PC-3 (cell line): ENCODE measurements at regions of chr10 and their contacts with region 1.

Region 1: DNA sequence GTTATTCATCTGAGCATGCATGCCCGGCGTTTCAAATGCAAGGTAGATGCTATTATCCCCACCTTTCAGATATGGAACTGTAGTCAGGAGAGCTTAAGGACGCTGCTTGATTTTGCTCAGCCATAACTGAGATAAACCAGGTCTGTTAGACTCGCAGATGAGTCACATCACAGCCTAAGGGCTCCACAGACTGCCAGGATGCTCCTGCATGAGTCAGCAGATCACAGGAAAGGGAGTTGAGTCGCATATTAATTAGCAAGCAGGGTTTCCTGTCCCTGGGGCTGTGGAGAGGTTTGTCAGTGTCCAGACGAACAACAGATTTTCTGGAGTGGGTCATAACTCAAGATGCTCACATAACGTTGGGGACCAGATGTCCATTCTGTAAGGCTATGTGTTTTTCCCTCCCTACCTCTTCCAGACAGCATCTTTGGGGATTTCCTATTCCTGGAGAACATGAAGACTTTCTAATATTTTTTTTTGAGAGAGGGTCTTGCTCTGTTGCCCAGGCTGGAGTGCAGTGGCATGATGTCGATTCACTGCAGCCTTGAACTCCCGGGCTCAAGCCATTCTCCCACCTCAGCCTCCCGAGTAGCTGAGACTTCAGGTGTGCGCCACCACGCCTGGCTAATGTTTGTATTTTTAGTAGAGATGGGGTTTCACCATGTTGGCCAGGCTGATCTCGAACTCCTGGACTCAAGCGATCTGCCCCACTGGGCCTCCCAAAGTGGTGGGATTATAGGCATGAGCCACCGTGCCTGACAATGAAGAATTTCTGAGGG is 36.7 kb downstream of the PFKFB3 start:
- DNase-seq: peak; percentile 94
- ATAC-seq: peak; percentile 94
- H3K4me3 ChIP-seq: no peak overlapping the region
- H3K27ac ChIP-seq: peak overlapping the region; percentile 57
- H3K4me1 ChIP-seq: peaks cover 8% of the 10 kb centered on the region; the same call in 1 of the 2 replicates
- H3K27me3 ChIP-seq: no peaks in the 10 kb centered on the region
- CTCF ChIP-seq: no peak

Region 2: DNA sequence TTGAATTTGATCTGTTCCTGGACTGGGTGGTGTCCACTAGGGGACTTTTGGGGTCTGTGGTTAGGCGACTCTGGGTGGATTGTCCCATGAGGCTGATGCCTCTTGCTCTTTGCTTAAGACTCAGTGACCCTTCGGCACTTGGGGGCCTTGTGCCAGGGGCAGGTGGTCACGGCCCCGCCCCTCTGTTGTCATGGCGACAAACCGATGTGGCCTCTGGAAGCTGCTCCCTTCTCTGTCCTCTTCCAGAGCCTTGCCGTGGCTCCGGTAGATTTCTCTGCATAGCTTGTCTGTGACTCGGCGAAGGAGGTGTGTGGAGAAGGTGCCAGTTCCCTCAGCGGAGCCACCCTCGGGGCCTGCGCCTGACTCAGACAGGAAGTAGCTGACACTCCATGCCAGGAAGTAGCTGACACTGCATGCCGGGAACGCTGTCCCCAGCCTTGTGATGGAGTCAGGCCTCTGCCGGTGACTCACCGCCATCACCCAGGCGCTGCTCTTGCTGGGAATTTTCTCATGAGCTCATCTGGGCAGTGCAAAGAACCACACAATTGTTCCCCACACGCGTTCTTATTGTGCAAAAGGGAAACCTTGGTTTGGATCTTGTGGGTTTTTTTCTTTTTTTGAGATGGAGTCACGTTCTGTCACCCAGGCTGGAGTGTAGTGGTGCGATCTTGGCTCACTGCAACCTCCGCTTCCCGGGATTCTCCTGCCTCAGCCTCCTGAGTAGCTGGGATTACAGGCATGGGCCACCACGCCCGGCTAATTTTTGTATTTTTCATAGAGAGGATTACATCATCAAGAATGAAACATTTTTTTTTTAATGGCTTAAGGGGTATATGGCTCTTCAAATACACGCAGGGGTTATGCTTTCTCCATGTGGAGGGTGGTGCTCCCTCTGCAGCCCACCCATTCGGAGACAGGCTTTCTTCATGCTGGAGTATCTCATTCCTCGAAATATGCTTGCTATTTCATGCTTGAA is 35.9 kb after region 1 on chr10:
- CTCF ChIA-PET with region 1: no interaction called
- POLR2A ChIA-PET with region 1: no interaction called
- intact Hi-C with region 1: loop called (anchors 2 kb)
- DNase-seq: peak; percentile 89
- ATAC-seq: peak; percentile 98
- H3K4me3 ChIP-seq: peak overlapping the region; percentile 50; the same call in 1 of the 2 replicates
- H3K27ac ChIP-seq: peak overlapping the region; percentile 87
- H3K4me1 ChIP-seq: peaks cover 15% of the 10 kb centered on the region
- H3K27me3 ChIP-seq: no peaks in the 10 kb centered on the region
- CTCF ChIP-seq: no peak

Region 3: GRCh38 chr10:6292741-6293151 is 53.3 kb after region 1 on chr10:
- CTCF ChIA-PET with region 1: no interaction called
- POLR2A ChIA-PET with region 1: no interaction called
- intact Hi-C with region 1: no loop called
- DNase-seq: peak; percentile 8
- ATAC-seq: no peak
- H3K4me3 ChIP-seq: no peak overlapping the region
- H3K27ac ChIP-seq: no peak overlapping the region
- H3K4me1 ChIP-seq: peaks cover 3% of the 10 kb centered on the region
- H3K27me3 ChIP-seq: no peaks in the 10 kb centered on the region
- CTCF ChIP-seq: no peak

Region 4: DNA sequence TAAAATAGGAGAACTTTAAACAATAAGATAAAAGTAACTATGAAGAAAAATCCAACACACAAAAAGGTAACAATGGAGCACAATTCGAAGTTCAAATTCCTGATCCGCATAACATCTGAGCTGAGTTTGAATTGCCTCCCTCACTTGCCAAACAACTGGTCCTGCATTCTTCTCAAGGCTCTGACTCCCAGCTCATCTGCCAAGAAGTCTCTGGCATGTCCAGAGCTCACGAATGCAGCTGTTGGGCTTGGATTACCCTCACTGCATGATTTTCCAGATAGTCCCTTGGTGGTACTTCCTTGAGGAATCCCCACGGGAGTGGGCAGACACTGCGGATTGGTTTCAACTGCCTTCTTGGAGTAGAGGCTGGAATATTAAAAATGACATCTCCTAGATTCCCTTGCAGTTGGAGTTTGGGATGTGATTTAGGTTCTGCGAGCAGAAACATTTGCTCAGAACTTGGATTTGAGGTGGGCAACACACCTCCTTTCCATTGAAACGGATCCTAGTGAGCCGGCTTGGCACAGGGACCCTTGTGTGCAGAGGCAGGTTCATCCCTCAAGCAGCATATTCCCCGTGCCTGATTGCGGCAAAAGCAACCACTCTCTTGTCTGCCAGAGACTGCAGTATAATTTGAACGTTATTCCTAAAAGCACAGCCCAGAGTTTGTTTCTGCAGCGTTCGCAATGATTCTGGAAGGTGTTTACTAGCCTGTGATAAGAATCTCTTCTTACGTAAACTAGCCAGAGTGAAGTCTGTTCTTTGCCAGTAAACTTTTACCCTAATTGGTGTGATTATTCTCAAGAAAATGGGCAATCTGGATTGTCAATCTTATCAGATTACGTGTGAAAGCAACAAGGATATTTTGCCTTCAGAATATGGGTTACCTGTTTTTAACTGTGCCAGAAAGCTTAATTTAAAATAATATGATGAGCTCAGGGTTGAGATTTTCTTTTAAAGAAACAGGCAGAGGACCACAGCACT is 364.0 kb after region 1 on chr10:
- CTCF ChIA-PET with region 1: no interaction called
- POLR2A ChIA-PET with region 1: no interaction called
- intact Hi-C with region 1: no loop called
- DNase-seq: no peak
- ATAC-seq: no peak
- H3K4me3 ChIP-seq: no peak overlapping the region
- H3K27ac ChIP-seq: no peak overlapping the region
- H3K4me1 ChIP-seq: no peaks in the 10 kb centered on the region
- H3K27me3 ChIP-seq: peaks cover 30% of the 10 kb centered on the region
- CTCF ChIP-seq: no peak